ENCODE measurements at regions of chr1 and their contacts with region 1.

Region 1: GRCh38 chr1:97920832-97921571 is at the start of gene DPYD:
- DNase-seq: peak; percentile 78 to 95 (median 90)

Region 2: GRCh38 chr1:97145321-97145956 is 775.6 kb before region 1 on chr1:
- intact Hi-C with region 1: loop called (anchors 10 kb)
- DNase-seq: peak; percentile 10 to 85 (median 58)

Region 3: DNA sequence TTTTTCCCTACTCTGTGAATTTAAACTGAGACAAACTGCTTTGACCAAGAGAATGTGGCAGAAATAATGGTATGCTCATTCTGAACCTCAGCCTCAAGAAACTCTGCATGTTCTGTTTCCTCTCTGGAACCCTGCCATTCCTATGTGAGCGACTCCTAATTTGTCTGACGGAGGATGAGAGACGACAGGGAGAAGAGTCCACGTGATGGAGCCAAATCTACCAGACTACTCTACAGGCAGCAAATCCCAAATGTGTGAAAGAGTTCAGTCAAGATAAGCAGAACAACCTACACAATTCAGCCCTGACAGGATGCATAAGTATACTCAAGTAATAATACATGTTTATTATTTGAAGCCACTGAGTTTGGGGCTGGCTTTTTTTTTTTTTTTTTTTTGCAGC is 153.6 kb before region 1 on chr1:
- intact Hi-C with region 1: no loop called
- DNase-seq: no peak

Region 4: DNA sequence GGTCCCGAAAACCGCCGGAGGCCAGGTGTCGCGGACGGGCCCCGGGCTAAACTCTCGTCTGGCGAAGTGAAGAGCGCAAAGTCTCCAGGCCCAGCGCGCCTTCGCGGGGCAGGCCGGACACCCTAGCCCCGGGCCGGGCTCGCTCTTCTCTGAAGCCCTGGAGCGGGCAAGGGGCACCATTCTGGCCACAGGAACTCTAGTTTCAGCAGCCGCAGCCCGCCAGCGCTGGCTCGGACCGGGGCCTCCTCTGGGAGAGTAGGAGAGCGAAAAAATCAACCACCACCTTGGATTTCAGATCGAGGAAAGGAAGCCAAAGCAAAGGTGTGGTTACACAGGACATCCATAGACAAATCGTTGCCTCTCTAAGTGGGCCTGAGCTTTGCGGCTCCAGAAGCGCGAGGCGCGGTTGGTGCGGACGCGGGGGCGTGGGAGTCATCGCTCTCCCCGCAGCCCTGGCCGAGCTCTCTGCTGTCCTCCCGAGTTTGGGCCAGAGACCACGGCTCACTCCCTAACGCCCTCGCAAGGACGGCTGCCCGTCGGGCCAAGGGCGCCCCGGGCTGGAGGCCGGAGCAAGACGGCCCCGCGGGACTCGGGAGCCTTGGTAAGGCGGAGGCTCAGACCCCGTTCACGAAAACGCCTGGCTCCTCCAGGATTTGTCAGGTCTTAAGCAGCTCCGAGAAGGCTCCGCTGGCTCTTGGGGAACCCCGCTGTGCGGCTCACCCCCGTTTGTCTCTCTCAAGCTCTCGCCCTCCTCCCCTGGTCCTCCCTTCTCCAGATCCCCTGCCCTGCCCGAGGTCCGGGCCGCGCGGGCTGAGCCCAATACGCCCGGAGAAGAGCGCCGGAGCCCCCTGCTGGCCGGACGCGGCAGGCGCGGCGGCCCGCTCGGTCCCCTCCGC is 132.7 kb after region 1 on chr1:
- intact Hi-C with region 1: loop called (anchors 10 kb)
- DNase-seq: peak in 39 of 42 donors; percentile 43 to 86 (median 69)

Region 5: DNA sequence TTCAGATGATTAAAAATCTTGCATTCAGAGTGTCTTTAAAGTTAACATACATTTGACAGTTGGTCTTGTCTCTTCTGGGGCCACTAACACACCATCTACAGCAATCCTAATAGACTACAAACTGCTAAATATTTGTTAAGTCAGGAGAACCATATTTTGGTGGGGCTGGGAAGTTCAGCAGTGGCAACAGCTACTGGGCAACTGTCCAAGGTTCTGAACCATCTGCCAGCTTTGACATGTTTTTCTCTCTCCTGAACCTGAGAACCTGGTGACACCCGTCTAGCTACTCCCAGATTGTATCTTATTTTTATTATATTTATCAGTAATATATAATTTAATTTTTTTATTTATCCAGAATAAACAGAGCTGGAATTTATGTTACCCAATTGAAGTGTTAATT is 198.8 kb after region 1 on chr1:
- intact Hi-C with region 1: no loop called
- DNase-seq: no peak